ENCODE measurements at regions of chr18 and their contacts with region 1.

Region 1: GRCh38 chr18:13003466-13003896 is 12.3 kb downstream of the CEP192 start:
- DNase-seq: peak; percentile 69 to 75
- H3K4me3 ChIP-seq: no peak overlapping the region
- H3K4me3 Mint-ChIP-seq: no peak overlapping the region
- H3K27ac Mint-ChIP-seq: no peak overlapping the region
- H3K4me1 ChIP-seq: peaks cover 4% of the 10 kb centered on the region; the same call in 1 of the 2 replicates
- H3K4me1 Mint-ChIP-seq: peaks cover 6% of the 10 kb centered on the region
- H3K27me3 ChIP-seq: no peaks in the 10 kb centered on the region
- H3K27me3 Mint-ChIP-seq: no peaks in the 10 kb centered on the region
- CTCF ChIP-seq: peak; percentile 42 to 50

Region 2: DNA sequence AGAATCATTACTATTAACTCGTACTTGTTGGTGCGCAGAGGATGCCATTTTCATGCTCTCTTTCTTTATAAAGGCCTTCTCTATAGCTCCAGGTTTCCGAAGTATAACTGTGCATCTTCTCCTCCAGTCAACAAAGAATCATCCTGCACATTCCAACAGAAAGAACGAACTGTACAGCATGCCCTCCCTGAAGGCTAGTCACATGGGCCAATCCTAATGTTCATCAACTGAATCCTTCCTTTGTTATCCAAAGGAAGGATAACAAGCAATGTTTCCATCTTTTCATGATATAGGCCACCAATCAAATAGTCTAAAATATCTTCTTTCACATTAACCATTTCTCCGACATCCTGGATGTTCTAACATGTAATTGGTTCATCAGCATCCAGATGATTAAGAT is 148.2 kb after region 1 on chr18:
- CTCF ChIA-PET with region 1: no interaction called
- POLR2A ChIA-PET with region 1: no interaction called
- intact Hi-C with region 1: loop called (anchors 1 kb)
- DNase-seq: no peak
- H3K4me3 ChIP-seq: no peak overlapping the region
- H3K4me3 Mint-ChIP-seq: no peak overlapping the region
- H3K27ac Mint-ChIP-seq: no peak overlapping the region
- H3K4me1 ChIP-seq: no peaks in the 10 kb centered on the region
- H3K4me1 Mint-ChIP-seq: no peaks in the 10 kb centered on the region
- H3K27me3 ChIP-seq: no peaks in the 10 kb centered on the region; the same call in 1 of the 2 replicates
- H3K27me3 Mint-ChIP-seq: peaks cover 21% of the 10 kb centered on the region
- CTCF ChIP-seq: no peak

Measured in Caco-2 (cell line).